Activated CD4-positive, alpha-beta memory T cell treated with anti-CD3 and anti-CD28 coated beads for 36 hours (primary cell): ENCODE measurements at regions of chr20 and their contacts with region 1.

Region 1: GRCh38 chr20:36886859-36887751 is 11.2 kb downstream of the TLDC2 start:
- DNase-seq: peak; percentile 90
- H3K4me3 Mint-ChIP-seq: no peak overlapping the region
- H3K27ac Mint-ChIP-seq: no peak overlapping the region
- H3K4me1 Mint-ChIP-seq: peaks cover 25% of the 10 kb centered on the region
- H3K27me3 Mint-ChIP-seq: no peaks in the 10 kb centered on the region

Region 2: DNA sequence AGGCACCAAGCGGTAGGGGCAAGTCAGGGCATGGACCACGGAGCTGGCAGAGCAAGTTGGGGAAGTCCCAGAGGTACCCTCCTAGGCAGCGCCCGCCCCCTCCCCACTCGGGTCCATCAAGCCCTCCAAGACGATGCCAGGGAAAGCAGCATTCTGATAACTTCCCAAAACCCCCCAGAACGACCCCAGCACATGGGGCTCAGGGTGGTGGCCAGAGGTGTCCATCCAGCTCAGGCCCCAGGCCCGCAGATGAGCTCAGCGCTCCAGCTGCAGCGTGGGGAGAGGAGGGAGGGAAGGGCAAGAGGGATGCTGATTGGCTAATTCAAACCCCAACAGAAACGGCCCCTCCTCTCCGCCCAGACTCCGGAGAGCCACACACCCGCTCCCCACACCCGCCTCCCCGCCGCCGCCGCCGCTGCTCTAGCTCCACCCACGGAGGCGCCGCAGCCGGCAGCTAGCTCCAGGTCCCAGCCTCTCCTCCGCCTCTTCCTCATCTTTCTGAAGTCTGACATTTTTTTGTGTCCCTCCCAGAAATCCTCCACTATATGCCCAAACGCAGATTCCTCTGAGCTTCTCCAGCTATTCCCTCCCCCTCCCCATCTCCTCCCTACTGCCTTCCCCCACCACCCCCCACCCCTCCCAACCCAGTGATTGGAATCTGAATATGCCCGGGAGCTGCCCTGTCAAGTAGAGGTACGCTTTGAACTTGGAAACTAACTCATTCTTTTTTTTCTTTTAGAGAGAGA is 51.5 kb before region 1 on chr20:
- CTCF ChIA-PET with region 1: interaction called, 3 read pairs
- POLR2A ChIA-PET with region 1: no interaction called
- intact Hi-C with region 1: loop called (anchors 1 kb)
- DNase-seq: peak; percentile 93
- H3K4me3 Mint-ChIP-seq: peak overlapping the region; percentile 80
- H3K27ac Mint-ChIP-seq: peak overlapping the region; percentile 76
- H3K4me1 Mint-ChIP-seq: peaks cover 14% of the 10 kb centered on the region
- H3K27me3 Mint-ChIP-seq: no peaks in the 10 kb centered on the region

Region 3: DNA sequence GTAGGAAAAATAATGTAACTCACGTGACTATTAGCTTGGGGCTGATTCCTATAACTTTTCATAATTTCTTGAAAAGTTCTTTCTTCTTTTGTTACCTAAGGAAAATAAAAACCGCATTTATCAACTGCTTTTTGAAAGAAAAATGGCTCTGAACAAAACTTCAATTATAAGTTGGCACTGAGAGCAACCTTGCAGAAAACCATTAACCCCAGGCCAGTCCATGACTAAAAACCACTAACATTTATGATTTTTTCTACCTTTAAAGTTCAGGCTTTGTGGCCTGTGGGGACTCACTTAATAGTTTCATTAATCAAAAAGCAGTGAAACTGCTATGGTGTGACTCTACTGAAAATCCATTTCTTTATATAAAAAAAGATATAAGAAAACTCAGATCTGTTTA is 133.5 kb after region 1 on chr20:
- CTCF ChIA-PET with region 1: no interaction called
- POLR2A ChIA-PET with region 1: no interaction called
- intact Hi-C with region 1: no loop called
- DNase-seq: no peak
- H3K4me3 Mint-ChIP-seq: no peak overlapping the region
- H3K27ac Mint-ChIP-seq: no peak overlapping the region
- H3K4me1 Mint-ChIP-seq: peaks cover 14% of the 10 kb centered on the region
- H3K27me3 Mint-ChIP-seq: no peaks in the 10 kb centered on the region